GM10248 (cell line): ENCODE measurements at regions of chr6 and their contacts with region 1.

Region 1: DNA sequence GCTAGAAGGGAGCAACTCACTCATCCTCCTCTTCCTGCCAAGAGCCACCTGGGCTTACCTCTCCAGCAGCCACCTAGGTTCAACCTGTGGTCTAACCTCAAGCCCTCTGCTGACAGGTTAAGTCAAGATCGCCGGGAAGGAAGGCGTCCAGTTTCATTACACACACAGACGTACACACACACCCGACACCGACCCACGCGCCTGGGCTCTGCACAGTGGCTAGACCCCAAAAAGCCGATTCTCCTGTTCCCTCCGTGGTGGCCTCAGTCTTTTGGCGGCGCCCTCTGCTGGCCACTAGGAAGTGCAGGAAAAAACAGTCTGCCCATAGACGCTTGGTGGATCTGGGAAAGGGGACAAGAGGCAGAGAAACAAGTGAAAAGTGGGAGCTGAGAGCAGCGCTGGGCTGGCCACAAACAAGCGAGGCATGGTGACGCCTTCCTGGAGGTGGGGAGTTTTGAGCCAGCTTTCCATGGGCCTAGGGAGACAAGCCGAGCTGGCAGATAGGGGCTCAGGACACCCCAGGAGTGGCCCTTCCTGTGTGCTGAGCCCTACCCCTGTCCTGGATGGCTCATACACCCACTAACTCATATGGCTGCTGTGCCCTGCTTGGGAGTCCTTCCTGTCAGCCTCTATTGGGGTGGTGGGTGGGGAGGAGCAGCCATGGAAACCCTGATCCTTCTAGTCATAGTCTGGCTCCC is 52.7 kb downstream of the MRPL14 start:
- DNase-seq: peak; percentile 85
- CTCF ChIP-seq: peak; percentile 97

Region 2: GRCh38 chr6:43608310-43608763 is 466.3 kb before region 1 on chr6:
- CTCF ChIA-PET with region 1: interaction called, 18 read pairs
- POLR2A ChIA-PET with region 1: no interaction called
- DNase-seq: peak; percentile 56
- CTCF ChIP-seq: peak; percentile 52

Region 3: GRCh38 chr6:43714311-43715055 is 360.1 kb before region 1 on chr6:
- CTCF ChIA-PET with region 1: interaction called, 10 read pairs
- POLR2A ChIA-PET with region 1: no interaction called
- DNase-seq: no peak
- CTCF ChIP-seq: no peak

Region 4: DNA sequence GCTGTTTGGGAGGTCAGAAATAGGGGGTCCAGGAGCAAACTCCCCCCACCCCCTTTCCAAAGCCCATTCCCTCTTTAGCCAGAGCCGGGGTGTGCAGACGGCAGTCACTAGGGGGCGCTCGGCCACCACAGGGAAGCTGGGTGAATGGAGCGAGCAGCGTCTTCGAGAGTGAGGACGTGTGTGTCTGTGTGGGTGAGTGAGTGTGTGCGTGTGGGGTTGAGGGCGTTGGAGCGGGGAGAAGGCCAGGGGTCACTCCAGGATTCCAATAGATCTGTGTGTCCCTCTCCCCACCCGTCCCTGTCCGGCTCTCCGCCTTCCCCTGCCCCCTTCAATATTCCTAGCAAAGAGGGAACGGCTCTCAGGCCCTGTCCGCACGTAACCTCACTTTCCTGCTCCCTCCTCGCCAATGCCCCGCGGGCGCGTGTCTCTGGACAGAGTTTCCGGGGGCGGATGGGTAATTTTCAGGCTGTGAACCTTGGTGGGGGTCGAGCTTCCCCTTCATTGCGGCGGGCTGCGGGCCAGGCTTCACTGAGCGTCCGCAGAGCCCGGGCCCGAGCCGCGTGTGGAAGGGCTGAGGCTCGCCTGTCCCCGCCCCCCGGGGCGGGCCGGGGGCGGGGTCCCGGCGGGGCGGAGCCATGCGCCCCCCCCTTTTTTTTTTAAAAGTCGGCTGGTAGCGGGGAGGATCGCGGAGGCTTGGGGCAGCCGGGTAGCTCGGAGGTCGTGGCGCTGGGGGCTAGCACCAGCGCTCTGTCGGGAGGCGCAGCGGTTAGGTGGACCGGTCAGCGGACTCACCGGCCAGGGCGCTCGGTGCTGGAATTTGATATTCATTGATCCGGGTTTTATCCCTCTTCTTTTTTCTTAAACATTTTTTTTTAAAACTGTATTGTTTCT is 304.8 kb before region 1 on chr6 and contains the start of gene VEGFA:
- CTCF ChIA-PET with region 1: interaction called, 174 read pairs
- POLR2A ChIA-PET with region 1: interaction called, 4 read pairs
- DNase-seq: peak; percentile 97
- CTCF ChIP-seq: peak; percentile 99

Region 5: GRCh38 chr6:44052419-44053023 is 22.1 kb before region 1 on chr6:
- CTCF ChIA-PET with region 1: interaction called, 14 read pairs
- POLR2A ChIA-PET with region 1: no interaction called
- DNase-seq: no peak
- CTCF ChIP-seq: no peak

Region 6: GRCh38 chr6:44086931-44087574 is 12.5 kb after region 1 on chr6:
- CTCF ChIA-PET with region 1: interaction called, 40 read pairs
- POLR2A ChIA-PET with region 1: no interaction called
- DNase-seq: no peak
- CTCF ChIP-seq: no peak